Ascending aorta (tissue), 2 donors: ENCODE measurements at regions of chr16 and their contacts with region 1.

Region 1: GRCh38 chr16:87853411-87854052 is 15.8 kb downstream of the SLC7A5 start:
- DNase-seq: peak; percentile 94 to 98
- H3K4me3 ChIP-seq: peak overlapping the region; percentile 41 to 61
- H3K27ac ChIP-seq: peak overlapping the region; percentile 73 to 78
- H3K4me1 ChIP-seq: peaks cover 9 to 22% of the 10 kb centered on the region in 2 donors
- H3K27me3 ChIP-seq: no peaks in the 10 kb centered on the region
- CTCF ChIP-seq: no peak

Region 2: DNA sequence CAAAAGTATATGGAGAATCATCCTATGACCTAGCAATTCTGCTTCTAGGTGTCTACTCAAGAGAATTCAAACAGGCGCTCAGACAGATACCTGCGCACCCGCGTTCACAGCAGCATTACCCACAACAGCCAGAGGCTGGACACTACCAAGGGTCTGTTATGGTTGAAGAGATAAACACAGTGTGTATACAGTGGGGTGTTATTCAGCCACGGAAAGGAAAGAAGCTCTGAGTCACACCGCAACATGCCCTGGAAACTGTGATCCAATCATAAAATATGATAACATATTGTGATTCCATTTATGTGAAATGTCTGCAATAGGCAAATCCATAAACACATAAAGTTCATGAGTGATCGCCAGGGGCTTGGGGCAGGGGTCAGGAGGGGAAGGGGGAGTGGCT is 269.3 kb before region 1 on chr16:
- intact Hi-C with region 1: no loop called
- DNase-seq: no peak
- H3K4me3 ChIP-seq: no peak overlapping the region
- H3K27ac ChIP-seq: no peak overlapping the region
- H3K4me1 ChIP-seq: peaks cover 10 to 25% of the 10 kb centered on the region in 2 donors
- H3K27me3 ChIP-seq: no peaks in the 10 kb centered on the region
- CTCF ChIP-seq: no peak

Region 3: DNA sequence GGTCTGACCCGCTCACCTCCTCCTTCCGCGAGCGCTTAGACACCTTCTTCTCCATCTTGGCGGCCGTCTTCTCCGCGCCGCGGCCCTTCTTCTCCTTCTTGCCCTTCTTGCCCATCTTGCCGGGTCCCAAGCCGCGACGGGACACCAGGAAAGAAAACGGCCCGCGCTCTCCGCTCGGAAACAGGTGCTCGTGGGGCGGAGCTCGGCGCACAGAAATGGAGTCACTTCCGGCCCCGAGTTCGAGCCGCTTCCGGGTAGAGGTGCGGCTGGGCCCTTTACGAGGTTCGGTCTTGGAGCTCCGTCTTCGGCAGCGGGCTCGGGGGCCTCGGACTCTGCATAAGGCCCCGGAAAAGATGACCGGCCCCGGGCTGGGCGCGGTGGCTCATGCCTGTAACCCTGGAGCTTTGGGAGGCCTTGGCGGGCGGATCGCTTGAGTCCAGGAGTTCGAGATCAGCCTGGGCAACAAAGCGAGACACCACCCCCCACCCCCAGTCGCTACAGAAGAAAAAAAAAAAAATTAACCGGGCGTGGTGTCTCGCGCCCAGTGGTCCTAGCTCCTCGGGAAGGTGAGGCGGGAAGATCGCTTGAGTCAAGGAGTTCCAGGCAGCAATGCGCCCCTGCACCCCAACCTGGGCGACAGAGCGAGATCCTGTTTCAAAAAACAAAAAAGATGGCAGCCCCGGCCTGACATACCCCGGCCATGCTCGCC is 87.6 kb before region 1 on chr16 and contains the start of gene KLHDC4:
- intact Hi-C with region 1: no loop called
- DNase-seq: peak; percentile 57 to 94
- H3K4me3 ChIP-seq: peak within 1 kb of the TSS; percentile 72 to 81
- H3K27ac ChIP-seq: peak within 1 kb of the TSS; percentile 81 to 86
- H3K4me1 ChIP-seq: peaks cover 8 to 9% of the 10 kb centered on the region in 2 donors
- H3K27me3 ChIP-seq: no peaks in the 10 kb centered on the region
- CTCF ChIP-seq: no peak
- total RNA-seq, gene KLHDC4: 38.4 TPM

Region 4: DNA sequence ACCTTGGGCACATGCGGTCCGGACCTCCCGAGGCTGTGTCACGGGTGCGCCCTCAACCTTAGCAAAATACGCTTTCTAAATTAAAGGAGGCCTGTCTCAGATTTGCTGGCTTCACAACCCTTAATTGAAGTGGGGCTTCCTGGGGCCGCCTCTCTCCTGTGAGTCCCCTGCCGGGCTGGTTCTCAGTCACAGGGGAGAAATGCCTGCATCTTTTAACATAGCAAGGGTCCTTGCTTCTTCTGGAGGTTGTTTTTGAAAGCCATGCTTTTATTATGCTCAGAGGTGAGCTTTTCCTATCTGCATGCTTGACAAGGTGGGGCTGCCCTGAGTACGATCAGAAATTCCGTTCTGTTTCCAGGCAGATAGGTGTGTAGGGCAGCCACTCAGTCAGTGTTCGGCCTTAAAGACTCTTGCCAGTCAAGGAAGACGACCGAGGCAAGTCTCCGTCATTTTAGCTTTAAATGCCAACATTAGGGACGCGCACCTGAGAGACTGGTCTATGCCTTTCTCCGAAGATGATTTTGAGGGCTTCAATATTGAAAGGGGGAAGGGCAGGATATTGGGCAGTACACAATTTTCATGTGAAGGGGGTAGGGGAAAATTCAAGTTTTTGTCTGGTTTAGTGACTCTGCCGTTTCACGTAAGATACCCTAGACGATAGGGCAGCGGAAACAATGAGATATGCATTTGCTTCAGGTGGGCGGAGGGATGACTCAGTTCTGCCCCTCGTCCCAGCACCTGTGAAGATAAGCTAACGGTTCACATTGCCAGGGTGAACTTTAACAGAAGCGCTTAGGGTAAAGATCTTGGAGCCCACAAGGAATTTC is 21.3 kb after region 1 on chr16:
- intact Hi-C with region 1: loop called (anchors 1 kb)
- DNase-seq: no peak
- H3K4me3 ChIP-seq: no peak overlapping the region
- H3K27ac ChIP-seq: no peak overlapping the region
- H3K4me1 ChIP-seq: no peaks in the 10 kb centered on the region
- H3K27me3 ChIP-seq: no peaks in the 10 kb centered on the region
- CTCF ChIP-seq: no peak